Left cardiac atrium (tissue), 4 donors: ENCODE measurements at regions of chr1 and their contacts with region 1.

Region 1: GRCh38 chr1:167687919-167688519 is 33.8 kb upstream of the MPZL1 start:
- DNase-seq: peak; percentile 67
- ATAC-seq: peak; percentile 27 to 36

Region 2: GRCh38 chr1:167629681-167630567 is 58.1 kb before region 1 on chr1 and contains the start of gene RCSD1:
- intact Hi-C with region 1: loop called in 1 of 2 experiments (anchors 5 kb)
- DNase-seq: peak; percentile 64
- ATAC-seq: peak; percentile 83 to 85
- total RNA-seq, gene RCSD1: 33.6 to 38.7 TPM

Region 3: GRCh38 chr1:167663002-167663772 is 24.8 kb before region 1 on chr1:
- intact Hi-C with region 1: no loop called
- DNase-seq: peak; percentile 53
- ATAC-seq: peak; percentile 43 to 89